CD4-positive, alpha-beta T cell (primary cell): ENCODE measurements at regions of chr5 and their contacts with region 1.

Region 1: DNA sequence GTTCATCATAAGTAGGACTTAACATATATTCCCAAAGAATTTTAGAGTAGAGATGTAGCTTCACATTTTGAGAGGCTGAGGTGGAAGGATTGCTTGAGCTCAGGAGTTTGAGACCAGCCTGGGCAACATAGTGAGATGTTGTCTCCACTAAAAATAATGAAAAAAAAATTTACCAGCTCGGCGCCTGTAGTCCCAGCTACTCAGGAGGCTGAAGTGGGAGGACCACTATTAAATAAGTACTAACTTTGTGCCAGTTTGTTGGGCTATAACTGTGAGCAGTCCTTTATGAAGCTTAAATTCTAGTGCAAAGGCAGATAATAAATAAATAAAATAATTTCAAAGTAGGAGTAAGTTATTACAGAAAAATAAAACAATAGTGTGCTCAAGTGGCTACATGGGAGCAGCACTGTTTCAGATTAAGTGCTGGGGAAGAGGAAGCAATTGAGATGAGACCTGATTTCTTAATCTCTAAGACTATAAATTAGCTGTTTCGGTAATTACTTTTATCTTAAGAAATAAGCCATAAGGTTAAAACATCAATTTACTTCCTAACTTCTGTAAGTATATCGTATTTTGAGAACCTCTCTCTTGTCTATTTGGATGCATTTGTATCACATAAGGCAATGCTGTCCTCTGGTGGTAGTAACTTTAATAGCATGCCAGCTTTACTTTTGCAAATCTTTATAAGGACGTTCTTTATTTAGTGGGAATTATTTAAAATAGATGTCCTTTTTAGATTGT is 98.9 kb downstream of the CSNK1G3 start:
- DNase-seq: peak in 5 of 14 experiments; percentile 3 to 78 (median 63)
- ATAC-seq: peak; percentile 82
- H3K4me3 ChIP-seq: no peak overlapping the region
- H3K4me3 Mint-ChIP-seq: no peak overlapping the region
- H3K27ac ChIP-seq: no peak overlapping the region
- H3K27ac Mint-ChIP-seq: peak overlapping the region; percentile 25
- H3K4me1 ChIP-seq: no peaks in the 10 kb centered on the region
- H3K4me1 Mint-ChIP-seq: no peaks in the 10 kb centered on the region
- H3K27me3 ChIP-seq: no peaks in the 10 kb centered on the region
- H3K27me3 Mint-ChIP-seq: no peaks in the 10 kb centered on the region
- CTCF ChIP-seq: peak; percentile 96

Region 2: GRCh38 chr5:122500245-122501075 is 1110.4 kb before region 1 on chr5:
- CTCF ChIA-PET with region 1: no interaction called
- POLR2A ChIA-PET with region 1: no interaction called
- intact Hi-C with region 1: loop called in 1 of 2 experiments (anchors 5 kb)
- DNase-seq: peak in 1 of 14 experiments; percentile 8
- ATAC-seq: no peak
- H3K4me3 ChIP-seq: no peak overlapping the region
- H3K4me3 Mint-ChIP-seq: no peak overlapping the region
- H3K27ac ChIP-seq: no peak overlapping the region
- H3K27ac Mint-ChIP-seq: no peak overlapping the region
- H3K4me1 ChIP-seq: no peaks in the 10 kb centered on the region
- H3K4me1 Mint-ChIP-seq: no peaks in the 10 kb centered on the region
- H3K27me3 ChIP-seq: no peaks in the 10 kb centered on the region
- H3K27me3 Mint-ChIP-seq: peaks cover 4% of the 10 kb centered on the region
- CTCF ChIP-seq: no peak

Region 3: GRCh38 chr5:122704243-122705036 is 906.4 kb before region 1 on chr5:
- CTCF ChIA-PET with region 1: interaction called, 5 read pairs
- POLR2A ChIA-PET with region 1: no interaction called
- intact Hi-C with region 1: loop called in 1 of 2 experiments (anchors 5 kb)
- DNase-seq: peak in 3 of 14 experiments; percentile 22 to 31 (median 26)
- ATAC-seq: no peak
- H3K4me3 ChIP-seq: no peak overlapping the region
- H3K4me3 Mint-ChIP-seq: no peak overlapping the region
- H3K27ac ChIP-seq: no peak overlapping the region
- H3K27ac Mint-ChIP-seq: no peak overlapping the region
- H3K4me1 ChIP-seq: no peaks in the 10 kb centered on the region
- H3K4me1 Mint-ChIP-seq: no peaks in the 10 kb centered on the region
- H3K27me3 ChIP-seq: no peaks in the 10 kb centered on the region
- H3K27me3 Mint-ChIP-seq: peaks cover 5% of the 10 kb centered on the region
- CTCF ChIP-seq: peak; percentile 65

Region 4: DNA sequence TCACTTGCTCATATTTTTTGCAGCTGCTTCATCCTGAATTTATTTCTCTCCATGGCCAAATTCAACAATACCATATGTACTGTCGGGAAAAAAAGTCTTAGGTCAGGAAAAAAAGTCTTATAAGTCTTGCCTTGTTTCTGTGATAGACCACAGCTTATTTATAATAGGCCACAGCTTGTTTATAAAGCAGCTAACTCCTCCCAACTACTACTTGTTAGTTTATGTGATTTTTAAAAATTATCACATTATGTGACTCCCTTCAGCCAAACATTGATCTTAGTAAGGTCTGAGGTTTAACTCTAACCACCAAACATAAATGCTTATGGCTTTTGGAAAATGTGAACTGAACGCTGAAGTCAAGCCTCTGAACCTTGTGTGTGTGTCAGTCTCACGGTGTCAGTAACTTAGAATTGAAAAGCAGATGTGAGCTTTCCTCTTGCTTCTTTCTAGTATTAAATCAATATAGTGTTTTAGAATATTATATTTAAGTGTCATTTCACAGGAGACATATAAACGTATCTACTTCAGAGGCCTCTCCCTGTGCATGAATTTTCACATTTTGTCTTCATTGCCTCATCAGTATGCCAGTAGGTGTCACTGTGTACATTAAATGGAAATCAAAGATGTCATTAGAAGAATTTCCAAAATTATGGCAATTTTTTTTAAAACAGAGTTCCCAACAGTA is 714.1 kb before region 1 on chr5:
- CTCF ChIA-PET with region 1: no interaction called
- POLR2A ChIA-PET with region 1: no interaction called
- intact Hi-C with region 1: loop called in 1 of 2 experiments (anchors 10 kb)
- DNase-seq: peak in 2 of 14 experiments; percentile 4 to 10
- ATAC-seq: no peak
- H3K4me3 ChIP-seq: no peak overlapping the region
- H3K4me3 Mint-ChIP-seq: no peak overlapping the region
- H3K27ac ChIP-seq: no peak overlapping the region
- H3K27ac Mint-ChIP-seq: no peak overlapping the region
- H3K4me1 ChIP-seq: no peaks in the 10 kb centered on the region
- H3K4me1 Mint-ChIP-seq: peaks cover under 1% of the 10 kb centered on the region
- H3K27me3 ChIP-seq: no peaks in the 10 kb centered on the region
- H3K27me3 Mint-ChIP-seq: no peaks in the 10 kb centered on the region
- CTCF ChIP-seq: no peak

Region 5: GRCh38 chr5:123367739-123368138 is 243.1 kb before region 1 on chr5:
- CTCF ChIA-PET with region 1: interaction called, 4 read pairs
- POLR2A ChIA-PET with region 1: no interaction called
- intact Hi-C with region 1: loop called in 1 of 2 experiments (anchors 5 kb)
- DNase-seq: peak in 1 of 14 experiments; percentile 3
- ATAC-seq: no peak
- H3K4me3 ChIP-seq: no peak overlapping the region
- H3K4me3 Mint-ChIP-seq: no peak overlapping the region
- H3K27ac ChIP-seq: no peak overlapping the region
- H3K27ac Mint-ChIP-seq: no peak overlapping the region
- H3K4me1 ChIP-seq: no peaks in the 10 kb centered on the region
- H3K4me1 Mint-ChIP-seq: no peaks in the 10 kb centered on the region
- H3K27me3 ChIP-seq: no peaks in the 10 kb centered on the region
- H3K27me3 Mint-ChIP-seq: no peaks in the 10 kb centered on the region
- CTCF ChIP-seq: no peak